ENCODE measurements at regions of chr3 and their contacts with region 1.

Region 1: DNA sequence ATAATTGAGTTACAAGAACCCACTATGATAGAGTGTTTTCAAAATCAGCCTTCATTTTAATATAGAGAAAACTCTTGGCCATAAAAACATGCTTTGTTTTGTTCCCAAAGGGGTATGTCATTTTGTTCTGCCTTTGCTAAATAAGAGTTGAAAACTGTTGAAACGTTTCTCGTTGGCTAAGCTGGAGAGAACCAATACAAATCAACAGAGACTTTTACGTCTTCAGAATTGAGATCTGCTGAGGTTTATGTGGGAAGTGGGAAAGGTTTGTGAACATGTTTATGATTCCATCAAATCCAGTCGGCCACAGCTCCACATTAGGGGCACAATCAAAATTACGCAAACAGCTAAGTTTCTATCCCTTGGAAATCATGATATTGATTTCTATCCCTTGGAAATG is 102.0 kb downstream of the IGF2BP2 start:
- DNase-seq: no peak
- ATAC-seq: no peak
- H3K4me3 Mint-ChIP-seq: no peak overlapping the region
- H3K27ac Mint-ChIP-seq: no peak overlapping the region
- H3K4me1 Mint-ChIP-seq: no peaks in the 10 kb centered on the region
- H3K27me3 Mint-ChIP-seq: peaks cover 2% of the 10 kb centered on the region

Region 2: DNA sequence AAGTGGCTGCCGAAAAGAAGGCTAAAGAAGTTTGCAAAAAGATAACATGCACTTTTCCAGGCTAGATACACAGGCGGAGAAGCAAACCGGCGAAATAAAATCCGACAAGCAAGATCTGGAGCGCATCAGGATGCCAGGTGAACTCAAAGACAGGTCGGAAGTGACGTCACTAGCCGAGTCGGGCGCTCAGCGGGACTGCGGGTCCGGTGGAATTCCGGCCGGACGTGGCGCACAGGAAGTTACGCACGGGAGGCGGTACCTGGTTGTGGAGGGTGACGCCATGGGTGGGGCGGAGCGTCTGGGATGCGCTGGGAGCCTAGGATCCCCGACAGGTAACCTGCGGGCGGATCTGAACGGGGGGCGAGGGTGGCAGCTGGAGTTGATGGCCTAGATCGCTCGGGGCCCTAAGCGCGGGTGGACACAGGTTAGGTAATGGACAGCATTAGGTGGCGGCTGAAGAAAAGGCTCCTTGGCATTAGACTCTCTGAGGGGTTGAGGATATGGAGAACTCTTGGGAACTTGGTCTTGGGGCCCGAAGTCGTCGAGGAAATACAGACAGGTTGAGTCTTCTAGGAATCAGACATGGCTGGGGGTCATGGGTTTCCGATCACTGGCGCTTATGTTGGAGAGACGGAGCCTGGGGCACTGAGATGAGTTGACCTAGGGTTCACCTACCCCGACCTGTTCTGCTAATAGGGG is 440.0 kb before region 1 on chr3:
- CTCF ChIA-PET with region 1: no interaction called
- POLR2A ChIA-PET with region 1: no interaction called
- intact Hi-C with region 1: no loop called
- DNase-seq: peak; percentile 98
- ATAC-seq: peak; percentile 100
- H3K4me3 Mint-ChIP-seq: peak overlapping the region; percentile 97
- H3K27ac Mint-ChIP-seq: peak overlapping the region; percentile 92
- H3K4me1 Mint-ChIP-seq: peaks cover 19% of the 10 kb centered on the region
- H3K27me3 Mint-ChIP-seq: peaks cover 7% of the 10 kb centered on the region

Region 3: GRCh38 chr3:185744997-185745843 is 22.3 kb after region 1 on chr3:
- CTCF ChIA-PET with region 1: interaction called, 4 read pairs
- POLR2A ChIA-PET with region 1: no interaction called
- intact Hi-C with region 1: loop called in 1 of 2 experiments (anchors 2 kb)
- DNase-seq: no peak
- ATAC-seq: no peak
- H3K4me3 Mint-ChIP-seq: no peak overlapping the region
- H3K27ac Mint-ChIP-seq: no peak overlapping the region
- H3K4me1 Mint-ChIP-seq: peaks cover 5% of the 10 kb centered on the region
- H3K27me3 Mint-ChIP-seq: peaks cover 2% of the 10 kb centered on the region

Region 4: GRCh38 chr3:185846037-185846436 is 123.2 kb after region 1 on chr3:
- CTCF ChIA-PET with region 1: no interaction called
- POLR2A ChIA-PET with region 1: no interaction called
- intact Hi-C with region 1: no loop called
- DNase-seq: no peak
- ATAC-seq: no peak
- H3K4me3 Mint-ChIP-seq: no peak overlapping the region
- H3K27ac Mint-ChIP-seq: no peak overlapping the region
- H3K4me1 Mint-ChIP-seq: no peaks in the 10 kb centered on the region
- H3K27me3 Mint-ChIP-seq: peaks cover 6% of the 10 kb centered on the region